Panc1 (cell line): ENCODE measurements at regions of chr12 and their contacts with region 1.

Region 1: GRCh38 chr12:3777206-3777809 is 24.4 kb upstream of the CRACR2A start:
- DNase-seq: peak; percentile 28
- ATAC-seq: peak; percentile 68; the same call in 1 of the 2 replicates
- H3K4me3 ChIP-seq: no peak overlapping the region
- H3K27ac ChIP-seq: no peak overlapping the region
- H3K4me1 ChIP-seq: no peaks in the 10 kb centered on the region
- H3K27me3 ChIP-seq: peaks cover 5% of the 10 kb centered on the region; the same call in 1 of the 2 replicates
- CTCF ChIP-seq: peak; percentile 66

Region 2: DNA sequence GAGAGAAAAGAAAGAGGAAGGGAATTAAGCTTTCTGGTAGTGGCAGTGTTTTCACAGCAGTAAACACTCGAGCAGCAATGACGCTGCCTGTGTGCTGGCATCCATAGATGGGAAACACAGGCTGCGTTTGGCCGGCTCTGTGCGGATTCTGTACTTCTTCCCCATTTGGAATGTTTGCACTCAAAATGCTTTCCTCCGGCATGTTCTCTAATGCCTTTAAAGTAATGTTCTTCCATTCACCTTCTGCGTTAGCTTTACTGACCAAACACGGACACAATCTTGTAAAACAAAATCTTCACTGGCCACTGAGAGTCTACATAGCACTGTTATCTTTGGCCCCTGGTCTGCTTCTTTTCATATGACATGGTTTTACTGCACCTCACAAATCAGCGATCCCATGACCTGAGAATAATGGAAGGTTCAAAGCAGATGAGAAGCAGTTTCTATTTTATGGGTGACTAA is 1804.4 kb before region 1 on chr12:
- CTCF ChIA-PET with region 1: no interaction called
- POLR2A ChIA-PET with region 1: interaction called, 17 read pairs
- in situ Hi-C with region 1: no loop called
- intact Hi-C with region 1: no loop called
- DNase-seq: no peak
- ATAC-seq: no peak
- H3K4me3 ChIP-seq: no peak overlapping the region
- H3K27ac ChIP-seq: no peak overlapping the region
- H3K4me1 ChIP-seq: no peaks in the 10 kb centered on the region
- H3K27me3 ChIP-seq: no peaks in the 10 kb centered on the region
- CTCF ChIP-seq: no peak

Region 3: GRCh38 chr12:3622021-3622821 is 155.1 kb before region 1 on chr12:
- CTCF ChIA-PET with region 1: no interaction called
- POLR2A ChIA-PET with region 1: no interaction called
- in situ Hi-C with region 1: no loop called
- intact Hi-C with region 1: no loop called
- DNase-seq: no peak
- ATAC-seq: no peak
- H3K4me3 ChIP-seq: no peak overlapping the region
- H3K27ac ChIP-seq: no peak overlapping the region
- H3K4me1 ChIP-seq: no peaks in the 10 kb centered on the region
- H3K27me3 ChIP-seq: no peaks in the 10 kb centered on the region; the same call in 1 of the 2 replicates
- CTCF ChIP-seq: no peak

Region 4: DNA sequence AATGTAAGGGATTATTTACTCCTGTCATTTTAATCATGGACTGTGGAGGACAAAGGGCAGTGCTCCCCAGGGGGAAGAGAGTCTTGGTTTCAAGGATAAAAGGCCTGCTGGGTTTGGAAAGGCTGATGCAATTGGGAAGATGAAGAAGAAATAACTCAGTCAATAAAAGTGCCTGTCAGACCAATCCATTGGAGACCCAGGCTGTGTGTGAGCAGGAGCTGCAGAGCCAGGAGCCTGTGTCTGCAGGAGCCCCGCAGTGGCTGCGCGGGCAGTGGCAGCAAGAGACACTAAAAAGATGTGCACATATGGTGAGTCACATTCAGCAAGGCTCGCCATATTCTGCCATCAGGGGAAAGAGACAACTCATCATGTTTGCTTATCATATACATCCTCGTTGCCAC is 114.8 kb before region 1 on chr12:
- CTCF ChIA-PET with region 1: no interaction called
- POLR2A ChIA-PET with region 1: no interaction called
- in situ Hi-C with region 1: no loop called
- intact Hi-C with region 1: loop called (anchors 10 kb)
- DNase-seq: no peak
- ATAC-seq: no peak
- H3K4me3 ChIP-seq: no peak overlapping the region
- H3K27ac ChIP-seq: no peak overlapping the region
- H3K4me1 ChIP-seq: no peaks in the 10 kb centered on the region
- H3K27me3 ChIP-seq: no peaks in the 10 kb centered on the region
- CTCF ChIP-seq: no peak

Region 5: DNA sequence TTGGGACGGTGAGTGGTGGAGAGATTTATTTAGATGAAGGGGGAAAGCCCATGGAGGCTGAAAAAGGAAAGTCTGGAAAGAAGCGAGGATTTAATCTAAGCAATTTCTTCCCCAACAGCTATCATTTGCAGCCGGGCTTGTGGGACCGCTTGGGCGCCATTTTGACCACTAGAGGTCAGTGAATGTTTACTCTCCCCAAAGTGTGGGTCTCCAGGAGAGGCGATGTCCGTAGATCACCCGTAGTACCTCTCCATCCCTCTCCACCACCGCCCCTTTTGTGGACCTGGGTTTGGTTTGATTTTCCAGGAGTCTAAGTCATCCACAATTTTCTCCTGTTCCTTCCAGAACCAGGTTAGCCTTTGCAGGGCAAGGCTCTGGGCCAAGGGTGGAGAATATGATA is 187.1 kb after region 1 on chr12:
- CTCF ChIA-PET with region 1: no interaction called
- POLR2A ChIA-PET with region 1: no interaction called
- in situ Hi-C with region 1: no loop called
- intact Hi-C with region 1: no loop called
- DNase-seq: peak; percentile 7
- ATAC-seq: no peak
- H3K4me3 ChIP-seq: no peak overlapping the region
- H3K27ac ChIP-seq: no peak overlapping the region
- H3K4me1 ChIP-seq: no peaks in the 10 kb centered on the region
- H3K27me3 ChIP-seq: no peaks in the 10 kb centered on the region
- CTCF ChIP-seq: peak; percentile 42